ENCODE measurements at regions of chr4 and their contacts with region 1.

Region 1: DNA sequence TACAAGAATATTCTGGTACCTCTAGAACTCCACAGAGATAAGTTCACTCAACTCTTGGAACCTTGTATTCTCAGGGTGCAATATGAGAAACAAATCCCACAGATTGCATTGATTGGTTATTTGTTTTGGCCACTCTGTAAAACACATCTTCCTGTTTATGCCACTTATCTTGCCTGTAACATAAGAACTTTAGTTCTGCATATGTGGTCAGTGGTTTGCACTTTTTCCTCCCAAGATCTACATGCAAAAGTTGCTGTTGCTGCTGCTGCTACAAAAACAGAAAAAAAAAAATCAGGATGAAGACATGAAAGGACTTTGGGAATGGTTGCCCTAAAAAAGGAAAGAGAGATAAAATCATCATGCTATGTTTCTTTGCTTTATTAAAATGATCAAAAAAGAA is 9.6 kb downstream of the ODAPH start:
- DNase-seq: no peak
- ATAC-seq: no peak
- H3K4me3 Mint-ChIP-seq: no peak overlapping the region
- H3K27ac Mint-ChIP-seq: no peak overlapping the region
- H3K4me1 Mint-ChIP-seq: no peaks in the 10 kb centered on the region
- H3K27me3 Mint-ChIP-seq: peaks cover 2% of the 10 kb centered on the region

Region 2: GRCh38 chr4:75525910-75526309 is 39.6 kb before region 1 on chr4:
- CTCF ChIA-PET with region 1: no interaction called
- POLR2A ChIA-PET with region 1: no interaction called
- intact Hi-C with region 1: no loop called
- DNase-seq: no peak
- ATAC-seq: no peak
- H3K4me3 Mint-ChIP-seq: no peak overlapping the region
- H3K27ac Mint-ChIP-seq: no peak overlapping the region
- H3K4me1 Mint-ChIP-seq: peaks cover 15% of the 10 kb centered on the region
- H3K27me3 Mint-ChIP-seq: no peaks in the 10 kb centered on the region

Region 3: GRCh38 chr4:75844151-75844662 is 278.7 kb after region 1 on chr4:
- CTCF ChIA-PET with region 1: interaction called, 12 read pairs
- POLR2A ChIA-PET with region 1: no interaction called
- intact Hi-C with region 1: no loop called
- DNase-seq: no peak
- ATAC-seq: no peak
- H3K4me3 Mint-ChIP-seq: no peak overlapping the region
- H3K27ac Mint-ChIP-seq: no peak overlapping the region
- H3K4me1 Mint-ChIP-seq: peaks cover 4% of the 10 kb centered on the region
- H3K27me3 Mint-ChIP-seq: no peaks in the 10 kb centered on the region

Measured in activated CD4-positive, alpha-beta T cell treated with anti-CD3 and anti-CD28 coated beads for 36 hours (primary cell).